CD4-positive, alpha-beta memory T cell (primary cell): ENCODE measurements at regions of chr19 and their contacts with region 1.

Region 1: GRCh38 chr19:53195265-53195903 is 2.2 kb upstream of the ZNF665 start:
- DNase-seq: peak; percentile 79 to 82 (median 80)
- H3K4me3 ChIP-seq: no peak overlapping the region
- H3K4me3 Mint-ChIP-seq: peak overlapping the region; percentile 26 to 99 (median 60)
- H3K27ac ChIP-seq: no peak overlapping the region
- H3K27ac Mint-ChIP-seq: peak overlapping the region; percentile 39 to 93 (median 75)
- H3K4me1 ChIP-seq: peaks cover 17% of the 10 kb centered on the region
- H3K4me1 Mint-ChIP-seq: peaks cover 20 to 60% (median 37%) of the 10 kb centered on the region in 4 donors
- H3K27me3 ChIP-seq: no peaks in the 10 kb centered on the region
- H3K27me3 Mint-ChIP-seq: peaks cover 0 to 1% of the 10 kb centered on the region in 2 donors

Region 2: DNA sequence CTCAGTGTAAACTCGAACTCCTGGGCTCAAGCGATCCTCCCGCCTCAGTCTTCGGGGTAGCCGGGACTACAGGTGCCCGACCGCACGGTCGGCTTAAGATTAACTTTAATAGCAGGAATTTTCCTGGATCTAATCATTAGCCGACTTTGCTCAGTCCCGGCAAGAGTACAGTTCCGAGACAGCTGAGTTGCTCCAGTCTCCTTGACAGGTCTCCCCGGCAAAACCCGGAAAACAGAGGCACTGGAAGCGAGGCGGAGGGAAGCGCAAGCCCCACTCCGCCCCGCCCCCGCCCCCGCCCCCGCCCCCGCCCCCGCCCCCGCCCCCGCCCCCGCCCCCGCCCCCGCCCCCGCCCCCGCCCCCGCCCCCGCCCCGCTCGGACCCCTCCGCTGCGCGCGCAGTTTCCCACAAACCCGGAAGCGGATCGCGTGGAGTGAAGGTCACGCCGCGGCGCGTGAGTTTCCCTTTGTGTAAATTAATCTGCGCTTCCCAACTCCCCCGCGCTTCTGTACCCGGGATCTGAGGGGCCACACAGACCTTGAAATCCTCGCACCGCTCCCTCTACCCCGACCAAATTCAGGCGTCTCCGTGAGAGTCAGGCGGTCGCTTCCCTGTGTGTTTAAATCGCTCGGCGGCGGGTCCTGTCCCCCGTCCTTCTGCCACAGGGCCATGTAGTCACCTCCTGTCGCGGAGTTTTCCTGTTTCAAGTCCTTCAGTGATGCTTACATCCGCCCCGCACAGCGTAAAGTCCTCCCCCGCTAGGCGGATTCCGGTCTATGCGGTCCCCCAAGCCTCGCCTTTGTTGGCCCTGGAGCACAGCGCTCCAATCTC is 898.4 kb before region 1 on chr19 and contains the start of gene ZNF480:
- CTCF ChIA-PET with region 1: no interaction called
- POLR2A ChIA-PET with region 1: no interaction called
- intact Hi-C with region 1: loop called (anchors 10 kb)
- DNase-seq: peak; percentile 87 to 89 (median 87)
- H3K4me3 ChIP-seq: peak within 1 kb of the TSS; percentile 89 to 92
- H3K4me3 Mint-ChIP-seq: peak within 1 kb of the TSS; percentile 94 to 99 (median 96)
- H3K27ac ChIP-seq: peak within 1 kb of the TSS; percentile 72
- H3K27ac Mint-ChIP-seq: peak within 1 kb of the TSS; percentile 97 to 100 (median 98)
- H3K4me1 ChIP-seq: peaks cover 16% of the 10 kb centered on the region
- H3K4me1 Mint-ChIP-seq: peaks cover 17 to 24% (median 19%) of the 10 kb centered on the region in 4 donors
- H3K27me3 ChIP-seq: no peaks in the 10 kb centered on the region
- H3K27me3 Mint-ChIP-seq: peaks cover 0 to 3% of the 10 kb centered on the region in 2 donors
- total RNA-seq, gene ZNF480: 26.7 to 26.9 TPM

Region 3: DNA sequence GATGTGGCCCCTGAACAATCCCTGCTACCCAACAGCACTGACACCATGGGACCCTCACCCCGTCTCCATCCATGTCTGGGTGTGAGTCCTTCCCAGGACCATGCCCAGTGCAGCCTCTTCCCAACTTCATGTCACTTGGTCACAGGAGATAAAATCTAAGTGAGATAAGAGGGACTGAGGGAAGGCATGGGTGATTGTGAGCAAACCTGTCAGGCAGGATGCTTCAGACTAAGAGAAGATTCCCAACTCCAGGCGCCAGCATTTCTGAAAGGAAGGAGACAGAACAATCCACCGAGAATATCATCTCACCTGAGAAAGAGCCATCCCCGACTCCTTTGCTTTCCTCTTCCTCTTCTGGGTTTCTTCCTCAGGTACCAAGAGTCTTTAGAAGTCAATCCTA is 305.5 kb before region 1 on chr19:
- CTCF ChIA-PET with region 1: no interaction called
- POLR2A ChIA-PET with region 1: no interaction called
- intact Hi-C with region 1: no loop called
- DNase-seq: no peak
- H3K4me3 ChIP-seq: no peak overlapping the region
- H3K4me3 Mint-ChIP-seq: no peak overlapping the region
- H3K27ac ChIP-seq: no peak overlapping the region
- H3K27ac Mint-ChIP-seq: no peak overlapping the region
- H3K4me1 ChIP-seq: no peaks in the 10 kb centered on the region
- H3K4me1 Mint-ChIP-seq: peaks cover 0 to 14% (median 6%) of the 10 kb centered on the region in 4 donors
- H3K27me3 ChIP-seq: no peaks in the 10 kb centered on the region
- H3K27me3 Mint-ChIP-seq: no peaks in the 10 kb centered on the region

Region 4: GRCh38 chr19:52942386-52943133 is 252.8 kb before region 1 on chr19:
- CTCF ChIA-PET with region 1: no interaction called
- POLR2A ChIA-PET with region 1: no interaction called
- intact Hi-C with region 1: loop called (anchors 5 kb)
- DNase-seq: peak; percentile 95 to 98 (median 97)
- H3K4me3 ChIP-seq: peak overlapping the region; percentile 68 to 84
- H3K4me3 Mint-ChIP-seq: peak overlapping the region; percentile 88 to 98 (median 96)
- H3K27ac ChIP-seq: peak overlapping the region; percentile 72
- H3K27ac Mint-ChIP-seq: peak overlapping the region; percentile 91 to 98 (median 95)
- H3K4me1 ChIP-seq: peaks cover 17% of the 10 kb centered on the region
- H3K4me1 Mint-ChIP-seq: peaks cover 10 to 32% (median 24%) of the 10 kb centered on the region in 4 donors
- H3K27me3 ChIP-seq: no peaks in the 10 kb centered on the region
- H3K27me3 Mint-ChIP-seq: no peaks in the 10 kb centered on the region

Region 5: GRCh38 chr19:53158119-53158656 is 37.2 kb before region 1 on chr19:
- CTCF ChIA-PET with region 1: no interaction called
- POLR2A ChIA-PET with region 1: interaction called, 5 read pairs
- intact Hi-C with region 1: loop called (anchors 5 kb)
- DNase-seq: peak in 3 of 5 donors; percentile 12 to 57 (median 21)
- H3K4me3 ChIP-seq: peak overlapping the region; percentile 29 to 58
- H3K4me3 Mint-ChIP-seq: peak overlapping the region; percentile 86 to 89 (median 88)
- H3K27ac ChIP-seq: peak overlapping the region; percentile 44
- H3K27ac Mint-ChIP-seq: peak overlapping the region in 6 of 7 donors; percentile 82 to 90 (median 88)
- H3K4me1 ChIP-seq: peaks cover 18% of the 10 kb centered on the region
- H3K4me1 Mint-ChIP-seq: peaks cover 11 to 30% (median 13%) of the 10 kb centered on the region in 4 donors
- H3K27me3 ChIP-seq: no peaks in the 10 kb centered on the region
- H3K27me3 Mint-ChIP-seq: peaks cover 0 to 6% of the 10 kb centered on the region in 2 donors

Region 6: GRCh38 chr19:53365134-53365898 is 169.9 kb after region 1 on chr19 and contains the start of gene ZNF525:
- CTCF ChIA-PET with region 1: interaction called, 5 read pairs
- POLR2A ChIA-PET with region 1: interaction called, 3 read pairs
- intact Hi-C with region 1: loop called (anchors 1 kb)
- DNase-seq: peak; percentile 93 to 97 (median 96)
- H3K4me3 ChIP-seq: peak within 1 kb of the TSS; percentile 57 to 87
- H3K4me3 Mint-ChIP-seq: peak within 1 kb of the TSS; percentile 95 to 99 (median 96)
- H3K27ac ChIP-seq: peak within 1 kb of the TSS; percentile 70
- H3K27ac Mint-ChIP-seq: peak within 1 kb of the TSS; percentile 90 to 98 (median 97)
- H3K4me1 ChIP-seq: peaks cover 6% of the 10 kb centered on the region
- H3K4me1 Mint-ChIP-seq: peaks cover 15 to 38% (median 21%) of the 10 kb centered on the region in 4 donors
- H3K27me3 ChIP-seq: no peaks in the 10 kb centered on the region
- H3K27me3 Mint-ChIP-seq: no peaks in the 10 kb centered on the region
- total RNA-seq, gene ZNF525: 36.5 to 36.6 TPM

Region 7: GRCh38 chr19:53467485-53468262 is 272.3 kb after region 1 on chr19 and contains the start of gene ZNF813:
- CTCF ChIA-PET with region 1: interaction called, 4 read pairs
- POLR2A ChIA-PET with region 1: no interaction called
- intact Hi-C with region 1: loop called (anchors 1 kb)
- DNase-seq: peak; percentile 88 to 96 (median 91)
- H3K4me3 ChIP-seq: peak within 1 kb of the TSS; percentile 57 to 62
- H3K4me3 Mint-ChIP-seq: peak within 1 kb of the TSS; percentile 89 to 96 (median 93)
- H3K27ac ChIP-seq: peak within 1 kb of the TSS; percentile 51
- H3K27ac Mint-ChIP-seq: peak within 1 kb of the TSS; percentile 83 to 94 (median 91)
- H3K4me1 ChIP-seq: peaks cover 13% of the 10 kb centered on the region
- H3K4me1 Mint-ChIP-seq: peaks cover 14 to 45% (median 25%) of the 10 kb centered on the region in 4 donors
- H3K27me3 ChIP-seq: no peaks in the 10 kb centered on the region
- H3K27me3 Mint-ChIP-seq: peaks cover 8 to 9% of the 10 kb centered on the region in 2 donors
- total RNA-seq, gene ZNF813: 9.4 to 10.1 TPM

Region 8: GRCh38 chr19:53867225-53868090 is 672.1 kb after region 1 on chr19 and contains the start of gene MYADM:
- CTCF ChIA-PET with region 1: no interaction called
- POLR2A ChIA-PET with region 1: no interaction called
- intact Hi-C with region 1: loop called (anchors 5 kb)
- DNase-seq: peak; percentile 100
- H3K4me3 ChIP-seq: peak within 1 kb of the TSS; percentile 85 to 90
- H3K4me3 Mint-ChIP-seq: peak within 1 kb of the TSS; percentile 95 to 99 (median 98)
- H3K27ac ChIP-seq: peak within 1 kb of the TSS; percentile 100
- H3K27ac Mint-ChIP-seq: peak within 1 kb of the TSS; percentile 99 to 100 (median 100)
- H3K4me1 ChIP-seq: peaks cover 30% of the 10 kb centered on the region
- H3K4me1 Mint-ChIP-seq: peaks cover 20 to 60% (median 28%) of the 10 kb centered on the region in 4 donors
- H3K27me3 ChIP-seq: no peaks in the 10 kb centered on the region
- H3K27me3 Mint-ChIP-seq: no peaks in the 10 kb centered on the region
- total RNA-seq, gene MYADM: 42.1 to 45.8 TPM